ENCODE measurements at regions of chr21 and their contacts with region 1.

Region 1: GRCh38 chr21:15592271-15592860 is 137.4 kb upstream of the USP25 start:
- DNase-seq: no peak
- H3K4me3 ChIP-seq: no peak overlapping the region
- H3K27ac ChIP-seq: no peak overlapping the region
- H3K4me1 ChIP-seq: no peaks in the 10 kb centered on the region
- H3K27me3 ChIP-seq: no peaks in the 10 kb centered on the region
- CTCF ChIP-seq: peak; percentile 20

Region 2: DNA sequence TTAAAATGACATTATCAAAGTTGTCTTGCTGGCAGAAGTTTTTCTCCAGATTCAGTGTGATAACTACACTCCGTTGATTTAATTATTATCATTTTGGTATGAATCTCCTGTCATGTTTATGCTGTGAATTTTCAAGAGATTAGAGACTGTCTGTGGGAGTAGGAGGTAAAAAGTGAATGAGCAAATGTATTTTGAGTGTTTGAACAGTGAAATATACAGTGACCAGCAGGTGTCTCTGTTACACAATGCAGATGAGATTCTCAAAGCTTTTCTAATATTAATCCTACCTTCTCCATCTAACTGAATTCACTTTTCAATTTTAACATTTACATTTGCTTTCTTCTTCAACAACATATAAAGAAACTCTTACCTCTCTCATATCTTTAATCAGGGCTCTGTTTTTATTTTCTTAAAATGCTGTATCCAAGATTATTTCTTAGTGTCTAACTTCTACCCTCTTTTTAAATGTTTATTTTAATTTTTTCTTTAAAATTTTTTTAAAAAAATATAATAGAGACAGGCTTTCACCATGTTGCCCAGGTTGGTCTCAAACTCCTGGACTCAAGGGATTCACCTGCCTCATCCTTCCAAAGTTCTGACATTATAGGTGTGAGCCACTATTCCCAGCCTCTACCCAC is 1188.6 kb before region 1 on chr21:
- intact Hi-C with region 1: loop called (anchors 10 kb)
- DNase-seq: no peak
- H3K4me3 ChIP-seq: no peak overlapping the region
- H3K27ac ChIP-seq: no peak overlapping the region
- H3K4me1 ChIP-seq: no peaks in the 10 kb centered on the region
- H3K27me3 ChIP-seq: no peaks in the 10 kb centered on the region
- CTCF ChIP-seq: peak; percentile 49

Region 3: DNA sequence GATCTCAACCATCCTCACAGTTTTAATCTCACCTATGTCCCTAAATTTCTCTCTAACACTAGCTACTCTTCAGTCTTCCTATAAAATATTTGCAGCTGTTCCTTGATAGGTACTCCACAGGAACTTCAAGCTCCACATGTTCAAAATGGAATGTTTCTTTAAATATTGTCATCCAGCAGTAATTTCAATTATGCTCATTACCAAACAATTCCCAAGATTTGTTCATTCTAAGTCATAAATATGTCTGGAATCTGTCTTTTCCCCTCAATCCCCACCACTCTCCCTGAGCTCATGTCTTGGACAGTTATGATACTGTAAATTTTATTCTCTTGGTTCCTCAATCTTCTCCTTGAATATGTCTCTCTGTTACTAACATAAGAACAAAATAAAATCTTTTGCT is 742.0 kb before region 1 on chr21:
- intact Hi-C with region 1: loop called (anchors 10 kb)
- DNase-seq: no peak
- H3K4me3 ChIP-seq: no peak overlapping the region
- H3K27ac ChIP-seq: no peak overlapping the region
- H3K4me1 ChIP-seq: no peaks in the 10 kb centered on the region
- H3K27me3 ChIP-seq: no peaks in the 10 kb centered on the region
- CTCF ChIP-seq: no peak

Region 4: DNA sequence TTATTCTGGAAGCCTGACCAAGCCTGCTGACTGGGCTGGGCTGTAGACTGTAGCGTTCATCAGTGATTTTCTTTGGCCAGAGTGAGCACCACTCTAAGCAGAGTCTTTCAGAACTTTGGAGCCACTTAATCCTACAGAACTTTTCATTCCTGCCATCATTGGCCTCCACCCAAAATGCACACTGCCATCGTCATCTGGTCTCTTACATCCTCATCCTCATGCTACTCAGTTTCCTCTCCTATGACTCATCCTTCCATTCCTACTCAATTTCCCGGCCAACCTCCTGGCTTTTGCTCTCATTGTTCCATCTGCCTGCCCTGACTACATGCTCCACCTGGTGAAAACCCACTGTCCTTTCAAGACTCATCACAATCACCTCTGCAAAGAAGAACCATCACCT is 96.4 kb before region 1 on chr21:
- intact Hi-C with region 1: no loop called
- DNase-seq: no peak
- H3K4me3 ChIP-seq: no peak overlapping the region
- H3K27ac ChIP-seq: no peak overlapping the region
- H3K4me1 ChIP-seq: no peaks in the 10 kb centered on the region
- H3K27me3 ChIP-seq: no peaks in the 10 kb centered on the region
- CTCF ChIP-seq: no peak